ENCODE measurements at regions of chr20 and their contacts with region 1.

Region 1: GRCh38 chr20:60057123-60057801 is 99.0 kb downstream of the CDH26 start:
- DNase-seq: peak; percentile 65
- ATAC-seq: peak; percentile 83
- H3K4me3 ChIP-seq: no peak overlapping the region
- H3K27ac ChIP-seq: no peak overlapping the region
- H3K4me1 ChIP-seq: peaks cover 9% of the 10 kb centered on the region; the same call in 1 of the 2 replicates
- H3K27me3 ChIP-seq: peaks cover 7% of the 10 kb centered on the region; the same call in 1 of the 2 replicates
- CTCF ChIP-seq: peak; percentile 93
- POLR2A ChIP-seq: no peak
- RAD21 ChIP-seq: peak; percentile 91

Region 2: DNA sequence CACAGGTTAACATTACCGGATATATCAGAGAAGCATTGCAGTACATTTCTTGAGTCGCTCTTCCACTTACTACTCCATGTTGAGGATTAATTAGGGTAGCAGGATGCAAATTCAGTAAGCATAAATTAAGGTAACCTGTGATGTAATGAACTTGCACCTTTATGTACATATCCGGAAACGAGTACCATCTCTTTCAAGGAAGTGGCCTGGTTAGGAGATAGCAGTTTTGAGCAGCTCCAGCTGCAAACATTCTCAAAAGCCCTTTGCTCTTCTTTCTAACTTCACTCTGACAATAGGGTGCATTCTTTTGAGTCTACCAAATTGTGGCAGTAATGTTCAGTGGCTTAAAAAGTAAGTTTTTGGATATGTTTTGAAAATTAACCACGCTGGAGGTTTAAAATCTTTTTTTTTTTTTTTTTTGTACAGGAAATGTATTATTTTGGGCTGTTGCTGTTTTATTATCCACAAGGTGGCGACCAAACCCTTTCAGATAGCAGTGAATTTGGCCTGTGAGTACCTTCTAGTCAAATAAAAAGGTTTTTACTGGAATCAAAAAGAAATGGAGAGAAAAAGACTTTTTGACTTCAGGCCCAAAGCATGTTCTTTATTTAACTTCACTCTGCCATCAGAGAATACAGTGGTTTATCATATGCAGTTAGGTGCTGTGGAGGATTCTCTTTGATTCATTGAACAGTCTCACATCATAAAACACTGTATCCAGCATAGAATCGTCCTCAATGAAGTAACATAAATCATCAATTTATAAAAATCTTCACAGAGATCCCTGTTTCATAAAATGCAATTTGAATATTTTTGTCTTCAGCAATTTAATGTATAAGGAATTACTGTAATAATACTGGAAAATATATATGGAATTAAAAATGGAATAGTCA is 108.2 kb before region 1 on chr20:
- CTCF ChIA-PET with region 1: no interaction called
- POLR2A ChIA-PET with region 1: no interaction called
- dilution Hi-C with region 1: no loop called
- in situ Hi-C with region 1: no loop called
- intact Hi-C with region 1: loop called (anchors 2 kb)
- DNase-seq: peak; percentile 67
- ATAC-seq: peak; percentile 67
- H3K4me3 ChIP-seq: no peak overlapping the region
- H3K27ac ChIP-seq: no peak overlapping the region
- H3K4me1 ChIP-seq: peaks cover 2% of the 10 kb centered on the region
- H3K27me3 ChIP-seq: no peaks in the 10 kb centered on the region
- CTCF ChIP-seq: peak; percentile 77
- POLR2A ChIP-seq: no peak
- RAD21 ChIP-seq: peak; percentile 72

Region 3: GRCh38 chr20:60009826-60010616 is 47.2 kb before region 1 on chr20:
- CTCF ChIA-PET with region 1: no interaction called
- POLR2A ChIA-PET with region 1: no interaction called
- dilution Hi-C with region 1: no loop called
- in situ Hi-C with region 1: no loop called
- intact Hi-C with region 1: no loop called
- DNase-seq: no peak
- ATAC-seq: no peak
- H3K4me3 ChIP-seq: no peak overlapping the region
- H3K27ac ChIP-seq: no peak overlapping the region
- H3K4me1 ChIP-seq: no peaks in the 10 kb centered on the region
- H3K27me3 ChIP-seq: peaks cover 8% of the 10 kb centered on the region
- CTCF ChIP-seq: no peak
- POLR2A ChIP-seq: no peak
- RAD21 ChIP-seq: no peak

Region 4: GRCh38 chr20:60071965-60072364 is 14.7 kb after region 1 on chr20:
- CTCF ChIA-PET with region 1: no interaction called
- POLR2A ChIA-PET with region 1: no interaction called
- dilution Hi-C with region 1: no loop called
- in situ Hi-C with region 1: no loop called
- intact Hi-C with region 1: no loop called
- DNase-seq: peak; percentile 9
- ATAC-seq: no peak
- H3K4me3 ChIP-seq: no peak overlapping the region
- H3K27ac ChIP-seq: no peak overlapping the region
- H3K4me1 ChIP-seq: no peaks in the 10 kb centered on the region
- H3K27me3 ChIP-seq: peaks cover 26% of the 10 kb centered on the region
- CTCF ChIP-seq: no peak
- POLR2A ChIP-seq: no peak
- RAD21 ChIP-seq: no peak

Region 5: GRCh38 chr20:61120595-61121515 is 1063.6 kb after region 1 on chr20:
- CTCF ChIA-PET with region 1: no interaction called
- POLR2A ChIA-PET with region 1: no interaction called
- dilution Hi-C with region 1: no loop called
- in situ Hi-C with region 1: no loop called
- intact Hi-C with region 1: loop called (anchors 10 kb)
- DNase-seq: peak; percentile 69
- ATAC-seq: peak; percentile 63
- H3K4me3 ChIP-seq: no peak overlapping the region
- H3K27ac ChIP-seq: no peak overlapping the region
- H3K4me1 ChIP-seq: no peaks in the 10 kb centered on the region
- H3K27me3 ChIP-seq: no peaks in the 10 kb centered on the region
- CTCF ChIP-seq: peak; percentile 47
- POLR2A ChIP-seq: no peak
- RAD21 ChIP-seq: peak; percentile 45

Region 6: GRCh38 chr20:61234803-61235113 is 1177.5 kb after region 1 on chr20:
- CTCF ChIA-PET with region 1: no interaction called
- POLR2A ChIA-PET with region 1: no interaction called
- dilution Hi-C with region 1: no loop called
- in situ Hi-C with region 1: loop called (anchors 25 kb)
- intact Hi-C with region 1: loop called (anchors 1 kb)
- DNase-seq: no peak
- ATAC-seq: no peak
- H3K4me3 ChIP-seq: no peak overlapping the region
- H3K27ac ChIP-seq: no peak overlapping the region
- H3K4me1 ChIP-seq: no peaks in the 10 kb centered on the region
- H3K27me3 ChIP-seq: peaks cover 10% of the 10 kb centered on the region
- CTCF ChIP-seq: no peak
- POLR2A ChIP-seq: no peak
- RAD21 ChIP-seq: no peak

Region 7: DNA sequence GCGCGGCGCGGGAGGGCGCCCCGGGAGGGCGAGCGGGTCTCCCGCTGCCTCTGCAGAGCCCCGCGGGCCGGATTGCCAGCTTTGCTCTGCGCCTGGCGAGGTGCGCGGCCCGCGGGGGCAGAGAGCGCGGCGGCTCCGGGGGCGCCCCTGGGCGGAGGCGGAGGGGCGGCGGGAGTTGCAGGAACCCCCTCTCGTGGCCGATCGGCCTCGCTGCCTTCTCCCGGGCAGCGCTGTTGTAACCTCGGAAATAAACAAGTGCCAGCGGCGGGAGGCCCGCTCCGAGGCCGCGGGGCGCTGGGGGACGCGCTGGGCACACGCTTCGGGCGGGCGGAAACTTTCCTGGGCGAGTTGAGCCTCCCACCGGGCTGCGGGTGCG is 1196.0 kb after region 1 on chr20:
- CTCF ChIA-PET with region 1: no interaction called
- POLR2A ChIA-PET with region 1: no interaction called
- dilution Hi-C with region 1: no loop called
- in situ Hi-C with region 1: loop called (anchors 25 kb)
- intact Hi-C with region 1: loop called (anchors 10 kb)
- DNase-seq: peak; percentile 45
- ATAC-seq: peak; percentile 63
- H3K4me3 ChIP-seq: peak overlapping the region; percentile 55
- H3K27ac ChIP-seq: peak overlapping the region; percentile 4; the same call in 1 of the 2 replicates
- H3K4me1 ChIP-seq: peaks cover 6% of the 10 kb centered on the region; the same call in 1 of the 2 replicates
- H3K27me3 ChIP-seq: peaks cover 25% of the 10 kb centered on the region
- CTCF ChIP-seq: peak; percentile 32
- POLR2A ChIP-seq: no peak
- RAD21 ChIP-seq: peak; percentile 29

Region 8: DNA sequence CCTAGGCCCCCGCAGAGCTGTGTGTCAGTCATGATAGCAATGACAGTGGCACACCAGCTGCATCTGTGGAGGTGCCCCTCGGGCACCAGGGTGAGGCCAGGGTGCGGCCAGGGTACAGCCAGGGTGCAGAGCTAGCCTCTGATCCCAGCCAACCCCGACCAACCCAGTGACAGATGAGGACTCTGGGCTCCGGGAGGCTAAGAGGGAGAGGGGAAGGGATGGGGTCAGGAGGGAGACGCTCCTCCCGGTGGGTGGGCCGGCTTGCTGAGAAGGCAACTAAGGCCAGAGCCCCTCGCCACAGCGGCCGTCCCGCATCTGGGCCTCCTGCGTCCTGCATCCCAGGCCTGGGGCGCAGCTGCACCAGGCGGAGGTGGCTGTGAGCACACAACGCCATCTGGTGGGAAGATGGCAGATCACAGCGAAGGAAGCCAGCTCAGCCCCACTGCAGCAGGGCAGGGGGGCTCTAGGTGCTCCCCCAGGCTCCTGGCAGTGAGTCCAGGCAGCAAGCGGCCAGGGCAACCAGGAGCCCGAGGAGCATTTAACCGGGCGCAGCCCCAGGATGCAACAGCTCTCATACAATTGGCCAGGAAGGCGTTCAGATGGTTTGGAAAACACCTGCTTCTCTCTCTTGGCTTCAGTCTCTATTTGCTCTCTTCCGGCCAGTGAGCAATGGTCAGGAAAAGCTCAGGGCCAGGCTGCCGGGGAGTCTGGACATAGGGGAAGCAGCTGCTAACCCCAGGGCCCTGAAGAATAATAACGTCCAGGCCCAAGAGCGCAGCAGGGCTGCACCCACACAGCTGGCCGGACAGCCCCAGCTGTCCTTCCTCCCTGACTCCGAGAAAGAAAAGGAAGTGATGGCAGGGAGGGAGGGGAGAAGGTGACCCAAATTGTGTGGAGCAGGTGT is 1839.0 kb after region 1 on chr20:
- CTCF ChIA-PET with region 1: no interaction called
- POLR2A ChIA-PET with region 1: no interaction called
- dilution Hi-C with region 1: no loop called
- in situ Hi-C with region 1: loop called (anchors 25 kb)
- intact Hi-C with region 1: loop called (anchors 5 kb)
- DNase-seq: peak; percentile 28
- ATAC-seq: peak; percentile 98
- H3K4me3 ChIP-seq: no peak overlapping the region
- H3K27ac ChIP-seq: no peak overlapping the region
- H3K4me1 ChIP-seq: no peaks in the 10 kb centered on the region
- H3K27me3 ChIP-seq: peaks cover 3% of the 10 kb centered on the region; the same call in 1 of the 2 replicates
- CTCF ChIP-seq: peak; percentile 79
- POLR2A ChIP-seq: no peak
- RAD21 ChIP-seq: peak; percentile 85

Measured in IMR-90 (cell line).